A549 (cell line): ENCODE measurements at regions of chr2 and their contacts with region 1.

Region 1: DNA sequence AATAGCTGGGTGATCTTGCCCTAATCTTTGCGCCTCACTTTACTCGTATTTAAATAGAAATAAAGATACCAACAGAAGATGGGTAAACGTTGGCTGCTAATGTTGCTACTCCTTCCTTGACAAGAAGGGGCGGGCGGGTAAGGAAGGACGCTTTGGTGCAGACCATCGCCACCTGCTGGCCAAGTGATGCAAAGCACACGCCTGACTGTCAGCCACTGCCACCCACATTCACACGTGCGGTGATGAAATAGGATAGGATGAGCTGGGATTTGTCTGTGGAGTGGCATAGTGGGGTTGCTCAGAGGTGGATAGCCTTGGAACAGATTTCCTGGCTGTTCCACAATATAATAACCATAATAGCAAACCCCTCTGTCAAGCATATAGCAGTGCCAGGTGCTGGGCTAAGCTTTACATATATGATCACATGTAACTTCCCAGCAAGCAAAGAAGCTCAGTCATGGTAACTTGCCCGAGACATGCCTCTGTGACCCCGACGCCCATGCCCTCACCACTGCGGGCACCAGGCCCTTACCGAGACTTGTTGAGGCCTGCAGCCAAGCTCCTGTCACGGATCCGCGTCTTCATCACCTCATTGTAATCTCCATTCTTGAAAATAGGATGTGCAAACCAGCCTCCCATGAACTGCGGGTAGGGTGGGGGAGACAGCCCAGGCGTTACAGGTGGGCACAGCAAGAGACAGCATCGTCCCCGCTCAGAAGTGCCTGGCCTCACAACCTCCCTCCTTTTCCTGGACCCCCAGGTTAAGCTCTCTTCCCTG is 39.3 kb downstream of the LCT start:
- DNase-seq: peak; percentile 75 to 82
- ATAC-seq: peak; percentile 86 to 95
- H3K4me3 ChIP-seq: no peak overlapping the region
- H3K27ac ChIP-seq: peak overlapping the region in 1 of 2 experiments; percentile 46; a peak in 2 of 6 replicates
- H3K4me1 ChIP-seq: no peaks in the 10 kb centered on the region
- CTCF ChIP-seq: peak; percentile 86
- EP300 ChIP-seq: no peak
- POLR2A ChIP-seq: no peak
- RAD21 ChIP-seq: peak; percentile 41 to 59; a peak in 3 of 5 replicates

Region 2: DNA sequence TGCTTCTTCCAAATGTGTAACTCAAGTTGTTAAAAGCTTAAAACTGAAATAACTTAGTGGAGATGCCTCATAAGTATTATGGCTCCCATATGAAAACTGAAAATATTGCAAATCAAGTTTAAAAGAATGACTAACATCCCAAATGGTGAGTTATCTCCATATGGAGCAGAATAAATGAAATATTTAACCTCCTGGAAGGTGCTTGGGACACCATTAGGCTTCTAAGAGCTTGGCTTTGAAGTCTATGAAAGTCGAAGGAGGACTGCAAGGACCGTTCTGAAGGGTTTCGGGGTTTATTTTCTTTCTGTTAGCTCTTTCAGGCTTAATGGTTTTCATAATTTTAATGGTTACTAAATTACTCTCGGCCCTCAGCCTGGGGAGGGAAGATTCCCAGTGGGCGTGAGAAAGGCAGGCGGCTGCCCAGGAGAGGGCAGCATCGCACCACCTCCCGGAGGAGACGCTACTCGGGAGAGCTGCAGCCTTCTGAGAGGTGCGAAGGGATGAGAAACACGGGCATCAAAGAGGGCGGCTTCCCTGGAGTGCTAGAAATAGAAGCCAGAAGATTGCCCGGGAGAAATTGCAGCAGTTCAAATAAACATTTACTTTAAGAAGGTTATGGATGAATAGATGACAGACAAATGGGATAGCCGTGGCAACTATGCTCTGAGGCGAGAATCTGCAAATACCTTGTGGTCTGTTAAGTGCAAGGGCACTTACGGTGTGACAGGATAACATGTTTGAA is 793.5 kb before region 1 on chr2:
- CTCF ChIA-PET with region 1: interaction called, 29 read pairs
- POLR2A ChIA-PET with region 1: no interaction called
- DNase-seq: peak; percentile 63 to 64
- ATAC-seq: peak; percentile 98 to 100
- H3K4me3 ChIP-seq: no peak overlapping the region
- H3K27ac ChIP-seq: no peak overlapping the region
- H3K4me1 ChIP-seq: no peaks in the 10 kb centered on the region; the same call in 2 of the 3 replicates
- CTCF ChIP-seq: peak; percentile 92
- EP300 ChIP-seq: no peak
- POLR2A ChIP-seq: no peak
- RAD21 ChIP-seq: peak; percentile 96 to 98

Region 3: GRCh38 chr2:135676031-135676430 is 121.7 kb before region 1 on chr2:
- CTCF ChIA-PET with region 1: no interaction called
- POLR2A ChIA-PET with region 1: no interaction called
- DNase-seq: no peak
- ATAC-seq: no peak
- H3K4me3 ChIP-seq: no peak overlapping the region
- H3K27ac ChIP-seq: no peak overlapping the region
- H3K4me1 ChIP-seq: no peaks in the 10 kb centered on the region
- CTCF ChIP-seq: no peak
- EP300 ChIP-seq: no peak
- POLR2A ChIP-seq: no peak
- RAD21 ChIP-seq: no peak

Region 4: DNA sequence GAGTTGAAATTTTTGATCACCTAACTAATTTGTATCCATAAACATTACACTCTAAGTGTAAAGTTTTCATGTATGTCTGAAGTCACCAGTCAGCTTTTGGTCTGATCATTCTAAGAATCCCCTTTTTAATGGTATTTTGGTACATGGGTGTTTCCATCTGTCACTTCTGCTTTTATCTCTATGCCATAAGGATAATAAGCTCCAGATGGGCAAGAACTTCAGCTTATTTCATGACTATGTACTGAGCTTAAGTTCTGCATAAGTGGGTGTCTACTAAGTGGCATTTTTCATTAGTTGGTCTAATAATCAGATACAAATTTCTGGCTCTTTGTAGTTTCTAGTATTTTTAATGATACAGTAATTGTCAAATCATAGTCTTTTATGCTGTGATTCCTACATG is 35.7 kb before region 1 on chr2:
- CTCF ChIA-PET with region 1: interaction called, 10 read pairs
- POLR2A ChIA-PET with region 1: no interaction called
- DNase-seq: no peak
- ATAC-seq: no peak
- H3K4me3 ChIP-seq: no peak overlapping the region
- H3K27ac ChIP-seq: no peak overlapping the region
- H3K4me1 ChIP-seq: no peaks in the 10 kb centered on the region
- CTCF ChIP-seq: no peak
- EP300 ChIP-seq: no peak
- POLR2A ChIP-seq: no peak
- RAD21 ChIP-seq: no peak

Region 5: GRCh38 chr2:135815269-135815668 is 17.6 kb after region 1 on chr2:
- CTCF ChIA-PET with region 1: interaction called, 11 read pairs
- POLR2A ChIA-PET with region 1: no interaction called
- DNase-seq: no peak
- ATAC-seq: no peak
- H3K4me3 ChIP-seq: no peak overlapping the region
- H3K27ac ChIP-seq: no peak overlapping the region
- H3K4me1 ChIP-seq: no peaks in the 10 kb centered on the region
- CTCF ChIP-seq: no peak
- EP300 ChIP-seq: no peak
- POLR2A ChIP-seq: no peak
- RAD21 ChIP-seq: no peak

Region 6: GRCh38 chr2:135913727-135914365 is 116.2 kb after region 1 on chr2:
- CTCF ChIA-PET with region 1: no interaction called
- POLR2A ChIA-PET with region 1: no interaction called
- DNase-seq: peak; percentile 12 to 45
- ATAC-seq: peak in 1 of 2 experiments; percentile 73; a peak in 4 of 6 replicates
- H3K4me3 ChIP-seq: no peak overlapping the region
- H3K27ac ChIP-seq: no peak overlapping the region
- H3K4me1 ChIP-seq: no peaks in the 10 kb centered on the region
- CTCF ChIP-seq: peak; percentile 81
- EP300 ChIP-seq: no peak
- POLR2A ChIP-seq: no peak
- RAD21 ChIP-seq: peak; percentile 80 to 81

Region 7: DNA sequence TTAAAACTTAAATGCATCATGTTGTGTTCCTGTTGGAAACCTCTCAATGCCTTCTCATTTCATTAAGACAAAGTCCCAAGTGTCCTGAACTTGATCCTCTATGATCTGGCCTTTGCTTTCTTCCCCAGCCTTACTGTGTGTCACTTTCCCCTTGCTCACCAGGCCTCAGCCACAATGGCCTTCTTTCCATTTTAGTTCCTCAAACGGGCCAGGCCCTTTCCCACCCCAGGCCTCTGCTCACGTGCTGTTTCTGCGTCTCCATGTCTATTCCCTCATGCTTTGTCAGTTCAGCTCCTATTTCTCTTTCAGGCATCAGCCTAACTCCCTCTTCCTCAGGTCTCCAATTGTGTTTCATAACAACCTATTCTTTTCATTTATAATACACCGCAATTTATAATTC is 300.8 kb after region 1 on chr2:
- CTCF ChIA-PET with region 1: no interaction called
- POLR2A ChIA-PET with region 1: no interaction called
- DNase-seq: no peak
- ATAC-seq: no peak
- H3K4me3 ChIP-seq: no peak overlapping the region
- H3K27ac ChIP-seq: no peak overlapping the region
- H3K4me1 ChIP-seq: no peaks in the 10 kb centered on the region
- CTCF ChIP-seq: no peak
- EP300 ChIP-seq: no peak
- POLR2A ChIP-seq: no peak
- RAD21 ChIP-seq: no peak